CD8-positive, alpha-beta memory T cell (primary cell): ENCODE measurements at regions of chr3 and their contacts with region 1.

Region 1: GRCh38 chr3:32414520-32415202 is 23.0 kb downstream of the CMTM7 start:
- DNase-seq: peak in 3 of 5 donors; percentile 51 to 72 (median 71)
- H3K4me3 ChIP-seq: no peak overlapping the region
- H3K4me3 Mint-ChIP-seq: peak overlapping the region; percentile 5 to 84 (median 60)
- H3K27ac ChIP-seq: no peak overlapping the region
- H3K27ac Mint-ChIP-seq: peak overlapping the region; percentile 94 to 98 (median 96)
- H3K4me1 ChIP-seq: peaks cover 72% of the 10 kb centered on the region
- H3K4me1 Mint-ChIP-seq: peaks cover 45 to 93% (median 66%) of the 10 kb centered on the region in 3 donors
- H3K27me3 ChIP-seq: no peaks in the 10 kb centered on the region
- H3K27me3 Mint-ChIP-seq: no peaks in the 10 kb centered on the region

Region 2: GRCh38 chr3:32428092-32429068 is 13.7 kb after region 1 on chr3:
- CTCF ChIA-PET with region 1: interaction called, 39 read pairs
- POLR2A ChIA-PET with region 1: interaction called, 15 read pairs
- DNase-seq: peak; percentile 23 to 73 (median 63)
- H3K4me3 ChIP-seq: peak overlapping the region; percentile 48
- H3K4me3 Mint-ChIP-seq: peak overlapping the region; percentile 48 to 88 (median 77)
- H3K27ac ChIP-seq: peak overlapping the region; percentile 35
- H3K27ac Mint-ChIP-seq: peak overlapping the region; percentile 92 to 98 (median 96)
- H3K4me1 ChIP-seq: peaks cover 91% of the 10 kb centered on the region
- H3K4me1 Mint-ChIP-seq: peaks cover 85 to 98% (median 93%) of the 10 kb centered on the region in 3 donors
- H3K27me3 ChIP-seq: no peaks in the 10 kb centered on the region
- H3K27me3 Mint-ChIP-seq: peaks cover 0 to 1% of the 10 kb centered on the region in 2 donors

Region 3: DNA sequence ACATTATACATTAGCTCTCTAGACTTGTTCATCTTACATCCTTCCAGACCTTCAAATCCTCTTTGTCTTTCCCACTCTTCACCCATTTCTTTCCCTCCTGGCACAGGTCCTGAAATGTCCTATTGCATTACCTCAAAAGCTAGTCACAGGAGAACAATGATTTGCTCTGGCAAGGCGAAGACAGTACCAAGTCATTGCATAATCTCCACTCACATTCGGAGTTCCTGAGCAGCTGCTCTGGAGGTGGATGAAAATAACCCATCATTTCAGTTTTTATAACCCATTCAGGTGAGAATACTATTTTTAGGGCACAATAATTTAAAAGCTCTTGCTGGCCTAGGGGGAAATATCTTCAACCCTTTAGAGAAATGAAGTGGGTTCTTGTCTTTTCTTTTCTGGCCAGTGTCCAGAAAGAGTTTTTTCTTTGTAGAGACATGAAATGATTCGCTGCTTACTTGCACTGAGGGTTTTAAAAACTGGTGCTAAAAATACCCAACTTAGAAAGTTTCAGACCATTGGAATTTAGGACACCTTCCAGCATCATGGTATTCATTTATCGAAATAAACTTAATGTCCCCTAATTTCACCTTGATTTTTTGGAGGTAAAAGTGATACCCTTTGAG is 179.4 kb after region 1 on chr3:
- CTCF ChIA-PET with region 1: no interaction called
- POLR2A ChIA-PET with region 1: no interaction called
- DNase-seq: no peak
- H3K4me3 ChIP-seq: no peak overlapping the region
- H3K4me3 Mint-ChIP-seq: no peak overlapping the region
- H3K27ac ChIP-seq: no peak overlapping the region
- H3K27ac Mint-ChIP-seq: no peak overlapping the region
- H3K4me1 ChIP-seq: no peaks in the 10 kb centered on the region
- H3K4me1 Mint-ChIP-seq: no peaks in the 10 kb centered on the region
- H3K27me3 ChIP-seq: no peaks in the 10 kb centered on the region
- H3K27me3 Mint-ChIP-seq: peaks cover 4 to 31% of the 10 kb centered on the region in 2 donors